ENCODE measurements at regions of chr2 and their contacts with region 1.

Region 1: DNA sequence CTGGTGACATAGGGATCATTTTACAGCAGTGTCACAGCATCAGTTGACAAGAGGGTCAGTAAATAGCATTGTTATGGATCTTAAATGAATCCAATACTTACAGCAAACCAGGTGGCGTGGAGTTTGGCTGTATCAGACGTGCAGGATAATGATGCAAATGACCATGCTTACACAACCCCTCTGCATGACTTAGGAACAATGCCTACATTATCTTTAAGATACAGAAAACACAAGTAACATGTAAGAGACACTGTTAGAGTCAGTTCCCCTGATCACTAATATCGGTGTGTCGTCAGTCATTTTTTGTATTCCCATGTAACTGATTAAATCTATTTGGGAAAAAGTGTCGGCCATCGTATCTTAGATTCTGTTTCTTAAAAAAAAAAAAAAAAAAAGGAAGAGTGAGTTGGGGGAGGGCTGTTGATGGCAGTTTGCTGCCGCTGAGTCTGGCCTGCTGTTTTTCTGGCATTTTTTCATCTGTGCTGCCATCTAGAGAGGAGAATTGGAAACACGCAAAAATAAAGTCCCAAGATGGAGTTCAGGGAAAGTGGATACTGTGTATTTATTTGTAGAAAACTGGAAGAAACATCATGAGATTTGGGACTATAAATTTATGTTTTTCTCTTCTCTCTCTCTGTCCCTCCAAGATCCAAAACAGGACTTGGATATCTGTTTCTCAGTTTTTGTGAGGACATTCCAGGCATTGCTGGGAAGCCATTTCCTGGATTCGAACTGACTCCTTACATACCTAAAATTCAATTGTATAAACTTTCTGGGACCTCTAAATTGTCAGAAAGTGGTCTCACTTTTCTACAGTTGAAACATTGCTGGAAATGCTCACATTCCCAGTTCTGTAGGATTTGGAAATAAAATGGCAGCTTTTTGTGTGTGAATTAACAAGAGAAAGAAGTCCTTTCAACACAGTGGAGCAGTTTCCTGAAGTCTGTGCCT is 60.3 kb upstream of the AGPS start:
- DNase-seq: peak in 1 of 2 donors; percentile 81
- ATAC-seq: peak; percentile 85 to 89 (median 89)
- H3K4me3 ChIP-seq: no peak overlapping the region
- H3K4me3 Mint-ChIP-seq: no peak overlapping the region
- H3K27ac ChIP-seq: no peak overlapping the region
- H3K27ac Mint-ChIP-seq: peak overlapping the region in 1 of 2 donors; percentile 62
- H3K4me1 ChIP-seq: no peaks in the 10 kb centered on the region
- H3K4me1 Mint-ChIP-seq: peaks cover 0 to 8% of the 10 kb centered on the region in 2 donors
- H3K27me3 ChIP-seq: no peaks in the 10 kb centered on the region
- H3K27me3 Mint-ChIP-seq: no peaks in the 10 kb centered on the region
- CTCF ChIP-seq: peak; percentile 70

Region 2: DNA sequence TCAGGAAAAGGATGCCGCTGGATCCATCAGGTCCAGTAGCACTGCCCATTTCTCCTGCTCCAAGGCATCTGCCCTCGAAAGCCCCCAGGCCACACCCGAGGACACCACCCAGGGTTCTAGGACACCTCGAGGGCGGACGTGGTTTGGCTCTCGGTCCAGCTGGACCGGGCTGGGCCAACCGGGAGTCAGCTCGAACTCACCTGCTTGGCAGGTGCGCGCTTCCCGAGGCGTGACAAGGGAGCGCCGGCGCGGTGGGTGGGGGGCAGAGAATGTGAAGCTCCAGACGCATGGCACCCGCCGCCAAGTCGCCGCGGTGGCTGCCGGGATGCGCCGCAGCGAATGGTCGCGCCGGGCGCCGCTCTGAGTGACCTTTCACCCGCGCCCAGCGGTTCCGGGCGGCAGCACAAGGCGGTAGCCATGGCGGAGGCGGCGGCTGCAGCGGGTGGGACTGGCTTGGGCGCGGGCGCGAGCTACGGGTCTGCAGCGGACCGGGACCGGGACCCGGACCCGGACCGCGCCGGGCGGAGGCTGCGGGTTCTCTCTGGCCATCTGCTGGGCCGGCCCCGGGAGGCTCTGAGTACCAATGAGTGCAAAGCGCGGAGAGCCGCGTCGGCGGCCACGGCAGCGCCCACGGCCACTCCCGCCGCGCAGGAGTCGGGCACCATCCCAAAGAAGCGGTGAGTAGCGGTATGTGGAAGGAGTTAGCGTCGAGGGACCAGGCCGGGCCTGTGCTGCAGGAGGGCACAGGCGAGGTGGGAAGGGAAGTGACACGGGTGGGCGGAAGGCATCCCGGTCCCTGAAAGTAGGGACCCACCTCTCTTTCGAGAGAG is 60.3 kb after region 1 on chr2 and contains the start of gene AGPS:
- intact Hi-C with region 1: no loop called
- DNase-seq: peak; percentile 72 to 84
- ATAC-seq: peak; percentile 95 to 96 (median 96)
- H3K4me3 ChIP-seq: peak within 1 kb of the TSS; percentile 89
- H3K4me3 Mint-ChIP-seq: peak within 1 kb of the TSS; percentile 94
- H3K27ac ChIP-seq: peak within 1 kb of the TSS; percentile 61
- H3K27ac Mint-ChIP-seq: peak within 1 kb of the TSS; percentile 84 to 96
- H3K4me1 ChIP-seq: peaks cover 11% of the 10 kb centered on the region
- H3K4me1 Mint-ChIP-seq: peaks cover 50 to 53% of the 10 kb centered on the region in 2 donors
- H3K27me3 ChIP-seq: no peaks in the 10 kb centered on the region
- H3K27me3 Mint-ChIP-seq: no peaks in the 10 kb centered on the region
- CTCF ChIP-seq: no peak
- total RNA-seq, gene AGPS: 27.4 to 36.0 (median 35.6) TPM

Region 3: DNA sequence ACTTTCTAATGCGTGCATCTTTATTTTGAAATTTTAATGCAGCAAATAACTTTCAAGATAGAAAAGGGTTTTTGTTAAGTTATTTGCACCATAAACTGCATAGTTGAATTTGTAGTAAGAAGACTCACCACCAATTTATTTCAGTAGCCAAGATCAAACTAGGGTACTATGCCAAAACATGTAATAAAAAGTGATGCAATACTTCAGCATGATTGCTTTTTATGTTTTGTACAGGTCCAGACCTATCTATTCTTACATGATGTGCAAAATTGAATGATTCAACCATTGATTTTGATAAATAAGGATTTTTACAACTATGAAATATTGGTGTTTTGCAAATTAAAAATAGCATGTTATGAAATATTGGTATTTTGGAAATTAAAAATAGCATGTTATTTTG is 87.0 kb after region 1 on chr2:
- intact Hi-C with region 1: loop called (anchors 1 kb)
- DNase-seq: no peak
- ATAC-seq: no peak
- H3K4me3 ChIP-seq: no peak overlapping the region
- H3K4me3 Mint-ChIP-seq: no peak overlapping the region
- H3K27ac ChIP-seq: no peak overlapping the region
- H3K27ac Mint-ChIP-seq: no peak overlapping the region
- H3K4me1 ChIP-seq: no peaks in the 10 kb centered on the region
- H3K4me1 Mint-ChIP-seq: peaks cover 27 to 36% of the 10 kb centered on the region in 2 donors
- H3K27me3 ChIP-seq: no peaks in the 10 kb centered on the region
- H3K27me3 Mint-ChIP-seq: no peaks in the 10 kb centered on the region
- CTCF ChIP-seq: no peak

Region 4: DNA sequence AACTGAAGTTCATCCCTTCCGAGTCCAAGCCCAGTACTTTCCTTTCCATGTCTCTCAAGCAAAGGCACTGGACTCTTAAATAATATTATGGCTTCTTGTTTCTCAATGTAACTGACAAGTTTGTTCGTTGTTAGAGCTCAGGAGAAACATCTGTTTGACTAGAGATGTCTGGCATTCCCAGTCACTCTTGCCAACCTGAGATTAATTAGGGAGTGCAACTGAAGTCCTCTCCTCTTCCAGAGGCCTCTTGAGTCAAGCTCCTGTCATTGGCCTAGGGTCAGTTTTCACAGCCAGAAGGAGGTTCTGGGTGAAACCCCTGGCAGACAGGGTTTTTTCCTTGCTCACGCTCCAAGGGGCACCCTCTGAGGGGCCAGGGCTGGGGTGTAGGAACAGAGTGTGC is 256.4 kb after region 1 on chr2:
- intact Hi-C with region 1: no loop called
- DNase-seq: no peak
- ATAC-seq: no peak
- H3K4me3 ChIP-seq: no peak overlapping the region
- H3K4me3 Mint-ChIP-seq: no peak overlapping the region
- H3K27ac ChIP-seq: no peak overlapping the region
- H3K27ac Mint-ChIP-seq: no peak overlapping the region
- H3K4me1 ChIP-seq: no peaks in the 10 kb centered on the region
- H3K4me1 Mint-ChIP-seq: no peaks in the 10 kb centered on the region
- H3K27me3 ChIP-seq: no peaks in the 10 kb centered on the region
- H3K27me3 Mint-ChIP-seq: peaks cover 7 to 13% of the 10 kb centered on the region in 2 donors
- CTCF ChIP-seq: no peak

Region 5: DNA sequence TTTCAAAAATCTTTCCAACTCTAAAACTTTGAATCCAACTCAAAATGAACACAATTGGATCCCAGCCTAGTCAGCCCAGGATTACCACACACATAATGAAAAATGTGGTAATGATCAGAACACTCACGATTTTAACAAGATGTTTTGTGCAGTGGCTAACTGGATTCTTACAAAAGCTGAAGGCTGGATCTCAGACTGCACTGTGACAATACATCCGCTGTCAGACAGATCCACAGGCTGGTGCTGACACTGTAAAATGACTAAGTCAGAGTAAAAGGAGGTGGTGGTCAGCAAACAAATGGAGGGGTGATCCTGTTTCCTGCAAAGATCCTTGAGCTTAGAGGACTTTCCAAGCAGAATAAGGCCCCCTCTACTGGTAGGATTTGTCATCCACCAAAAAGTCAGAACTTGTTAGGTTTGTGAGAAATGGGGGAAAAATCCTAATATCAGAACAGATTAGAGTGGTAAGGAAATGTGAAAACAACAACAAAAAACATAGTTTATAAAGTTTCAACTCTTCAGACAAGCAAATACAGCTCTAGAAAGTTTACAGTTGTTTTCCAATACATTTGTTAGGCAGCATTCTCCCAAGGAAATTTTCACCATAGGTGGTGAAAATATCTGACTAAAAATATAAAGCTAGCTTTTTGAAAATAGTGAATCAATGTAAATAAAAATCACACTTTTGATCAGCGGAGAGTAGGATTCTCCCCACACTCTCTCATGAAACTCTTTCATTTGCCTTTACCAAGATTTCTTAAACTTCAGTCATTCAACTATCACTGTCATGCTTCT is 272.2 kb after region 1 on chr2:
- intact Hi-C with region 1: loop called (anchors 5 kb)
- DNase-seq: peak in 1 of 2 donors; percentile 42
- ATAC-seq: peak in 1 of 3 donors; percentile 24
- H3K4me3 ChIP-seq: no peak overlapping the region
- H3K4me3 Mint-ChIP-seq: no peak overlapping the region
- H3K27ac ChIP-seq: no peak overlapping the region
- H3K27ac Mint-ChIP-seq: no peak overlapping the region
- H3K4me1 ChIP-seq: no peaks in the 10 kb centered on the region
- H3K4me1 Mint-ChIP-seq: no peaks in the 10 kb centered on the region
- H3K27me3 ChIP-seq: peaks cover 2% of the 10 kb centered on the region
- H3K27me3 Mint-ChIP-seq: peaks cover 7 to 14% of the 10 kb centered on the region in 2 donors
- CTCF ChIP-seq: peak; percentile 44

Region 6: DNA sequence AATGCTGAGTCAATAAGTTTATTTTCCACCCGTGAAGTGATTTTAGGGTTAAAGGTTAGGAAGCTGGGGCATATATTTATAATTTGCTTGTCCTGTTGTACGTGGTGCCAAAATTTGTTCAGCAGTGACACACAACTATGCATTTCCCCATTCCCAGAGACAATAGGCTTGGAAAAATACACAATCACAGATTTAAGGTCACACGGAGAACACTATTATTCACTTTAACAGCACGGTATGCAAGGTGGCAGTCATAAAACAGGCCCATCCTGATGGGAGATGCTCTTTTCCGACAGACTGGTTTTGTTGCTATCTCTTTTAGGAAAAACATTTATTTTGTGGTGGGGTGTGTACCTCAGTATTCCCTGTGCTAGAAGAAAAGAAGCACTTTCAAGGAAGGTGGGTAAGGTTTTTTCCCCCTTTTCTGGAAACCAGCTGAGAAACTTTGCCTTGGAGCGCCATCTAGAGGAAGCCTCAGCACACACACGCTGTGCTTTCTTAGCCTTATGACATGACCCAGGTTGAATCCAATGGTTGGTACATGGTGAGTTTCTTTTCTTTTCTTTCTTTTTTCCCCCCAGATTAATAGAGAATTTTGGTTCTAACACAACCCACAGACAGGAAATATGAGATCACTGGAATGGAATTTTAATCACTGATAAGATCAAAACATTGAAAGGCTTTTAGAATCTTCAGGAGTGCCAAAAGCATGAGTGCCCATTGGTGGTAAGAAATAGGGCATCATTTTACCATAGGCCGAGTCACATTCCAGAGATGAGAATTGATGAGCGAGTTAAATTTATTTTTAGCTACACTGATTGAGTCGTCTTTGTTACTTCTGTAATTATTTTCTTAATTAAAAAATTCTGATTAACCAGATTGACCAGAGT is 392.3 kb after region 1 on chr2:
- intact Hi-C with region 1: loop called (anchors 1 kb)
- DNase-seq: peak in 1 of 2 donors; percentile 63
- ATAC-seq: peak; percentile 34 to 63 (median 54)
- H3K4me3 ChIP-seq: no peak overlapping the region
- H3K4me3 Mint-ChIP-seq: no peak overlapping the region
- H3K27ac ChIP-seq: no peak overlapping the region
- H3K27ac Mint-ChIP-seq: no peak overlapping the region
- H3K4me1 ChIP-seq: no peaks in the 10 kb centered on the region
- H3K4me1 Mint-ChIP-seq: no peaks in the 10 kb centered on the region
- H3K27me3 ChIP-seq: peaks cover 4% of the 10 kb centered on the region
- H3K27me3 Mint-ChIP-seq: peaks cover 22 to 41% of the 10 kb centered on the region in 2 donors
- CTCF ChIP-seq: peak; percentile 62

Region 7: DNA sequence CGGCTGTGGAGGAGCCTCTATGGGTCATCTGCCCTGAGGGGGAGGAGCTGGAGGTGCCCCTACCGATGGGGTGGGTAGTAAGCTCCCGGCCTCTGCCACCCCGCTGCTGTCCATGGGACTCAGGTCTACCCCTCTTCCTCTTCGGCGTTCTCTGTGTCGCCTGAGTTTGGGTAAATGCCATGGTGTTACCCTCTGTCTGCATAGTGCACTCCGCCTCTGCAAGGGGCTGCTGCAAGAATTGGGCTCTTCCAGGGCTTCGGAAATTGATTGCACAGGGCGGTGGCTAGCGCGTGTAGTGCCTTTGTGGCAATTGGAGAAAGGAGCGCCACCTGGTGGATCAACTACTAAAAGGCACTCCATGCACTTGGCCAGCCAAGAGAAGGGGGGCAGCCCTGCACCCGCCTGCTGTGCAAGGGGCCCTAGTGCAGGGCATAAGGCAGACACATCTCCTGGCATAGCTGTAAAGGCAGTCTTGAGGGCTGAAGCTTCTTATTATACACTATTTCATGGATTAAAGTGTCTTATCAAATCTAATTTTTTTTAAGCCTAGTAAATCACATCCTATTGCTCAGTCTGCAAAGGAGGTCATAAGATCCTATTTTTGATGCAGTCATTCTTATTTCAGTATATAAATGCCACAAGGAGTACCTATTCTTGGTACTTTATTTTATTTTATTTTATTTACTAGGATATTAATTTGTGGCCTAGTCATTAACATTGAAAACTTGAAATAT is 431.4 kb after region 1 on chr2:
- intact Hi-C with region 1: loop called (anchors 1 kb)
- DNase-seq: peak; percentile 67 to 85
- ATAC-seq: peak; percentile 90 to 99 (median 98)
- H3K4me3 ChIP-seq: no peak overlapping the region
- H3K4me3 Mint-ChIP-seq: no peak overlapping the region
- H3K27ac ChIP-seq: no peak overlapping the region
- H3K27ac Mint-ChIP-seq: no peak overlapping the region
- H3K4me1 ChIP-seq: peaks cover 5% of the 10 kb centered on the region
- H3K4me1 Mint-ChIP-seq: peaks cover 4% of the 10 kb centered on the region in 2 donors
- H3K27me3 ChIP-seq: no peaks in the 10 kb centered on the region
- H3K27me3 Mint-ChIP-seq: peaks cover 24 to 32% of the 10 kb centered on the region in 2 donors
- CTCF ChIP-seq: peak; percentile 90